Sigmoid colon (tissue), 7 donors: ENCODE measurements at regions of chr18 and their contacts with region 1.

Region 1: DNA sequence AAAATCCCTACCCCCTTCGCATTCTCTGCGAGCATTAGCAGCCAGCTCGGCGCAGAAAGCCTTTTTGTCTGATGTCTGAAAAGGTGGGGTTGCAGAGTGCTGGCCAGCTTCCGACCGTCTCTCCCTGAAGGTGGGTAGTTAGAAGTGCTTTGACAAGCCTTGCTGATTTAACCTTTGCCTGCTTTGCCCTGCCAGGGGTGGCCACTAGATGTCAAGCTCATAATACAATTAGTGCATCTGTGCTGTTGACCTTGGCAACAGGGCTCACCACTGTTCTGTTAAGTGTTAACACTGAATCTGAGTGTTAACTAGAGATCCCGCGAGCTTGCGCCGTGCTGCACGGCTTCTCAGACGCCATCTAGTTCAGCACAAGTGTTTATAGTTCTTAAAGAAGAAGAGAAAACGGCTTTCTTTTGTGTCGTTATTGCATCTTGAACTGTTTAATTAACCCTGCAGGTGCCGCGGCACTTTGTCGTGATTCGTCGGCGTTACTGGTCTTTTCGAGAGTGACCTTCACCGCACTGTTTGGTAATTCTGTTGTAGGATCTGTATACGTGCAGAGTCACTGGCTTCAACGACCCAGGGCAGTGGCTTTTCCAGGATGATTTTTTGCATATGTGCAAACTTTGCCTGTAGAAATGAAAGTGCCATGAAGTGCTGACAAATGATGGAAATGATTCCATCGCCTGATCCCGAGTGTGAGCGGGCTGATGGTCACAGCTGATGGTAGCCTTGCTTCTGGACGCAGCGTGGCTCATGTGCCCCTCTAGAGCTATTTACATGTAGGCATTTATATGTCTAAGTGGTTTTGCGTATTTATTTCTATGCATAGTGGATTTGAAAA is 5.5 kb downstream of the SALL3 start:
- DNase-seq: no peak
- H3K4me3 ChIP-seq: no peak overlapping the region
- H3K27ac ChIP-seq: no peak overlapping the region
- H3K4me1 ChIP-seq: peaks cover 0 to 14% (median 13%) of the 10 kb centered on the region in 4 donors
- H3K27me3 ChIP-seq: peaks cover 34 to 94% (median 63%) of the 10 kb centered on the region in 3 donors
- CTCF ChIP-seq: no peak
- EP300 ChIP-seq: no peak
- POLR2A ChIP-seq: no peak

Region 2: GRCh38 chr18:77899972-77900754 is 1085.0 kb before region 1 on chr18:
- intact Hi-C with region 1: loop called (anchors 10 kb)
- DNase-seq: no peak
- H3K4me3 ChIP-seq: peak overlapping the region in 3 of 4 donors; percentile 11 to 32 (median 30)
- H3K27ac ChIP-seq: no peak overlapping the region
- H3K4me1 ChIP-seq: peaks cover 0 to 9% (median 8%) of the 10 kb centered on the region in 4 donors
- H3K27me3 ChIP-seq: peaks cover 0 to 26% (median 0%) of the 10 kb centered on the region in 3 donors
- CTCF ChIP-seq: peak; percentile 28 to 72 (median 52)
- EP300 ChIP-seq: no peak
- POLR2A ChIP-seq: no peak

Region 3: GRCh38 chr18:79019881-79020280 is 34.7 kb after region 1 on chr18:
- intact Hi-C with region 1: no loop called
- DNase-seq: no peak
- H3K4me3 ChIP-seq: no peak overlapping the region
- H3K27ac ChIP-seq: no peak overlapping the region
- H3K4me1 ChIP-seq: no peaks in the 10 kb centered on the region
- H3K27me3 ChIP-seq: peaks cover 0 to 15% (median 3%) of the 10 kb centered on the region in 3 donors
- CTCF ChIP-seq: no peak
- EP300 ChIP-seq: no peak
- POLR2A ChIP-seq: no peak

Region 4: GRCh38 chr18:79077181-79077580 is 92.0 kb after region 1 on chr18:
- intact Hi-C with region 1: no loop called
- DNase-seq: no peak
- H3K4me3 ChIP-seq: no peak overlapping the region
- H3K27ac ChIP-seq: no peak overlapping the region
- H3K4me1 ChIP-seq: peaks cover 0 to 8% (median 0%) of the 10 kb centered on the region in 4 donors
- H3K27me3 ChIP-seq: no peaks in the 10 kb centered on the region
- CTCF ChIP-seq: no peak
- EP300 ChIP-seq: no peak
- POLR2A ChIP-seq: no peak